Panc1 (cell line): ENCODE measurements at regions of chr16 and their contacts with region 1.

Region 1: GRCh38 chr16:84726079-84726668 is 26.4 kb downstream of the USP10 start:
- DNase-seq: no peak
- ATAC-seq: peak; percentile 82
- H3K4me3 ChIP-seq: peak overlapping the region in 1 of 2 experiments; percentile 35; a peak in 3 of 4 replicates
- H3K27ac ChIP-seq: peak overlapping the region; percentile 98
- H3K4me1 ChIP-seq: peaks cover 72% of the 10 kb centered on the region
- H3K27me3 ChIP-seq: no peaks in the 10 kb centered on the region
- CTCF ChIP-seq: peak; percentile 90

Region 2: GRCh38 chr16:84511180-84511824 is 214.9 kb before region 1 on chr16:
- CTCF ChIA-PET with region 1: no interaction called
- POLR2A ChIA-PET with region 1: no interaction called
- in situ Hi-C with region 1: no loop called
- intact Hi-C with region 1: loop called (anchors 5 kb)
- DNase-seq: no peak
- ATAC-seq: peak; percentile 88
- H3K4me3 ChIP-seq: peak overlapping the region in 1 of 2 experiments; percentile 26; a peak in 2 of 4 replicates
- H3K27ac ChIP-seq: no peak overlapping the region; the same call in 1 of the 2 replicates
- H3K4me1 ChIP-seq: peaks cover 9% of the 10 kb centered on the region
- H3K27me3 ChIP-seq: no peaks in the 10 kb centered on the region
- CTCF ChIP-seq: peak; percentile 89

Region 3: DNA sequence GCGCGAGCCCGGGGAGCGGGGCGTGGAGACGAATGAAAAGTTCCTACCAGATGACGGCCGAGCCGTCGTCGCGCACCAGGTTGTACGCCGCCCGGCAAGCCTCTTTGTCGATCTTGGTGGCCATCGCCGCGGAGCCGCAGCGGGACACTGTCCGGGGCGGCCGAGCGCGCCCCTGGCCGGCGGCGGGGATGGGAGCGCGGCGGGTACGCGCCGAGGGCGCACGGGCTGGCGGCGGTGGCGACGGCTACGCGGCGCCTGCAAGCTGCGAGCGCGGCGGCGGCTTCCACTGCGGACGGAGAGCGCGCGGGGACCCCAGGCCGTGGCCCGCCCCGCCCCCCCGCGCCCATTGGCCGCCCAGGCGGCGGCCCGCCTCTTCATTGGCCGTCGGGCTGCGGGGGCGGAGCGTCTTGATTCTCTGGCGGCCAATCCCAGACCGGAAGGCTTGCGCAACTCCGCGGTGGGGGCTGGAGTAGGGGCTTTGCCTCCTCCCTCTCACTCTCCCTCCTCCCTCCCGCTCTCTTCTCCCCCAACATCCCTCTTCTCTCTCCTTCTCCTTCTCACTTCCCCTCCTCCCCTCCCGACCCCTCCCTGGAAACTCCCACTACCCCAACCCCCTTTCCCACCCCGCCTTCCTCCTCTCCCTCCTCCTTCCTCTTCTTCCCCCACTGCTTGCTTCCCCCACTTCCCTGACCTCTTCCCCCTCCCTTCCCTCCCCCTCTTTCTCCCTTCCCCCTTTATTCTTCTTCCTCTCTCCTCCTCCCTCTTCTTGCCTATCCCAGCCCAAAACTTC is 108.2 kb before region 1 on chr16 and contains the start of gene COTL1:
- CTCF ChIA-PET with region 1: interaction called, 3 read pairs
- POLR2A ChIA-PET with region 1: no interaction called
- in situ Hi-C with region 1: no loop called
- intact Hi-C with region 1: loop called (anchors 5 kb)
- DNase-seq: peak; percentile 82
- ATAC-seq: peak; percentile 84
- H3K4me3 ChIP-seq: peak within 1 kb of the TSS; percentile 80 to 84
- H3K27ac ChIP-seq: peak within 1 kb of the TSS; percentile 87
- H3K4me1 ChIP-seq: peaks cover 31% of the 10 kb centered on the region
- H3K27me3 ChIP-seq: no peaks in the 10 kb centered on the region
- CTCF ChIP-seq: no peak
- total RNA-seq, gene COTL1: 302 TPM

Region 4: GRCh38 chr16:84665843-84666242 is 60.3 kb before region 1 on chr16:
- CTCF ChIA-PET with region 1: interaction called, 3 read pairs
- POLR2A ChIA-PET with region 1: interaction called, 14 read pairs
- in situ Hi-C with region 1: no loop called
- intact Hi-C with region 1: no loop called
- DNase-seq: no peak
- ATAC-seq: no peak
- H3K4me3 ChIP-seq: no peak overlapping the region
- H3K27ac ChIP-seq: no peak overlapping the region
- H3K4me1 ChIP-seq: no peaks in the 10 kb centered on the region
- H3K27me3 ChIP-seq: no peaks in the 10 kb centered on the region
- CTCF ChIP-seq: no peak

Region 5: DNA sequence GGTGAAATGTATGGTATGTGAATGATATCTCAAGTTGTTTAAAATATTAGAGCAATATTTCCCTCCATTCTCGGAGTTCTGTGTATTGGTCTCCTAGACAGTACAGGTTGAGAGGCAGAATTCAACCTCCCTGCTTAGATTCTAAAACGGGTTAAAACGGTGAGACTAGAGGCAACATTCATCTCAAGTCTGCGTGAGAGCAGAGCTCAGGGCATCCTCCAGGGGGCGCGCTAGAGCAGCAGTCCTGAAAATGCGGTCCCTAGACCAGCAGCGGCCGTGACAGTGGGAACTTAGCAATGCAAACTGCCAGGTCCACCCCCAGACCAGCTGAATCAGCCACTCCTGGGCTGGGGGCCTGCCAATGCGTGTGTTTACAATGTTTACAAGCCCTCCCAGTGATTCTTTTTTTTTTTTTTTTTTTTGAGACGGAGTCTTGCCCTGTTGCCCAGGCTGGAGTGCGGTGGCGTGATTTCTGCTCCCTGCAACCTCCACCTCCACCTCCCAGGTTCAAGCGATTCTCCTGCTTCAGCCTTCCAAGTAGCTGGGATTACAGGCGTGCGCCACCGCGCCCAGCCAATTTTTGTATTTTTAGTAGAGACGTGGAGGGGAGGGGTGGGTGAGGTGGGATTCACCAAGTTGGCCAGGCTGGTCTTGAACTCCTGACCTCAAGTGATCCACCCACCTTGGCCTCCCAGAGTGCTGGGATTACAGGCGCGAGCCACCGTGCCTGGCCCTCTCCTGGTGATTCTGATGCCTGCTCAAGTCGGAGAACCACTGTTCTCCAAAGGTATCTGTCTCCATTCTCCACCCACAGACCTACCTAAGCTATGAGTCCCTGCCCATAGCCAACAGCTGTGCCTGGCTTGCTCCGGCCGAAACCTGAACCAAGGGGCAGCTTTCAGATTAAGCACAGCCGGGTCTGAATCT is 53.6 kb before region 1 on chr16:
- CTCF ChIA-PET with region 1: interaction called, 23 read pairs
- POLR2A ChIA-PET with region 1: no interaction called
- in situ Hi-C with region 1: no loop called
- intact Hi-C with region 1: loop called (anchors 1 kb)
- DNase-seq: peak; percentile 36
- ATAC-seq: peak; percentile 90
- H3K4me3 ChIP-seq: no peak overlapping the region
- H3K27ac ChIP-seq: no peak overlapping the region
- H3K4me1 ChIP-seq: no peaks in the 10 kb centered on the region
- H3K27me3 ChIP-seq: no peaks in the 10 kb centered on the region
- CTCF ChIP-seq: peak; percentile 89